ENCODE measurements at regions of chr19 and their contacts with region 1.

Region 1: GRCh38 chr19:38869856-38870607 is 8.0 kb downstream of the RINL start:
- DNase-seq: peak; percentile 92 to 96 (median 93)
- H3K4me3 ChIP-seq: peak overlapping the region; percentile 78
- H3K4me3 Mint-ChIP-seq: peak overlapping the region; percentile 87 to 94 (median 91)
- H3K27ac ChIP-seq: peak overlapping the region; percentile 66
- H3K27ac Mint-ChIP-seq: peak overlapping the region; percentile 48 to 97 (median 94)
- H3K4me1 ChIP-seq: peaks cover 37% of the 10 kb centered on the region
- H3K4me1 Mint-ChIP-seq: peaks cover 30 to 58% (median 51%) of the 10 kb centered on the region in 3 donors
- H3K27me3 ChIP-seq: no peaks in the 10 kb centered on the region
- H3K27me3 Mint-ChIP-seq: no peaks in the 10 kb centered on the region

Region 2: GRCh38 chr19:38734426-38735256 is 135.4 kb before region 1 on chr19:
- CTCF ChIA-PET with region 1: interaction called, 15 read pairs
- POLR2A ChIA-PET with region 1: interaction called, 6 read pairs
- DNase-seq: peak in 4 of 5 donors; percentile 29 to 64 (median 42)
- H3K4me3 ChIP-seq: peak overlapping the region; percentile 56
- H3K4me3 Mint-ChIP-seq: peak overlapping the region; percentile 83 to 91 (median 88)
- H3K27ac ChIP-seq: peak overlapping the region; percentile 54
- H3K27ac Mint-ChIP-seq: peak overlapping the region; percentile 86 to 97 (median 88)
- H3K4me1 ChIP-seq: peaks cover 25% of the 10 kb centered on the region
- H3K4me1 Mint-ChIP-seq: peaks cover 39 to 73% (median 40%) of the 10 kb centered on the region in 3 donors
- H3K27me3 ChIP-seq: no peaks in the 10 kb centered on the region
- H3K27me3 Mint-ChIP-seq: peaks cover 0 to 4% of the 10 kb centered on the region in 2 donors

Region 3: DNA sequence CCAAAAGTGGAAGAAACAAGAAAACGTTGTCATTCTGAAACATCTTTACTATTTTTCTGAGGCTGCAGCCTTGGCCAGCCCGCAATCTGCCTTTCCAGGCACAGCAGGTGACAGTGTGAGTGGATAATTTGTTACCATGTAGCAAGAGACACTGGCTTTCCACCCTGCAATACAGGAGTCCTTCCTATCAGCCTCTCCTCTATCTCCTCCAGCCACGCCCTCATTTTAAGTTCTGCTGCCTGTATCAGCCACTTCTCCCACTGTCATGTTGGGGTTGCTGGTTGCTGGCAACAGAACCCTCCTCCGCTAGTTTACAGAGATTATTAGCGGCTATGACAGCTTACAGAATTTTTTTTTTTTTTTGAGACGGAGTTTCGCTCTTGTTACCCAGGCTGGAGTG is 89.0 kb before region 1 on chr19:
- CTCF ChIA-PET with region 1: no interaction called
- POLR2A ChIA-PET with region 1: no interaction called
- DNase-seq: no peak
- H3K4me3 ChIP-seq: no peak overlapping the region
- H3K4me3 Mint-ChIP-seq: no peak overlapping the region
- H3K27ac ChIP-seq: no peak overlapping the region
- H3K27ac Mint-ChIP-seq: no peak overlapping the region
- H3K4me1 ChIP-seq: no peaks in the 10 kb centered on the region
- H3K4me1 Mint-ChIP-seq: no peaks in the 10 kb centered on the region
- H3K27me3 ChIP-seq: no peaks in the 10 kb centered on the region
- H3K27me3 Mint-ChIP-seq: peaks cover 3 to 4% of the 10 kb centered on the region in 2 donors

Region 4: GRCh38 chr19:38842439-38843174 is 27.4 kb before region 1 on chr19:
- CTCF ChIA-PET with region 1: interaction called, 11 read pairs
- POLR2A ChIA-PET with region 1: interaction called, 21 read pairs
- DNase-seq: peak; percentile 36 to 84 (median 78)
- H3K4me3 ChIP-seq: peak overlapping the region; percentile 33
- H3K4me3 Mint-ChIP-seq: peak overlapping the region; percentile 70 to 91 (median 76)
- H3K27ac ChIP-seq: no peak overlapping the region
- H3K27ac Mint-ChIP-seq: peak overlapping the region; percentile 84 to 95 (median 92)
- H3K4me1 ChIP-seq: peaks cover 71% of the 10 kb centered on the region
- H3K4me1 Mint-ChIP-seq: peaks cover 63 to 80% (median 65%) of the 10 kb centered on the region in 3 donors
- H3K27me3 ChIP-seq: no peaks in the 10 kb centered on the region
- H3K27me3 Mint-ChIP-seq: peaks cover 0 to 10% of the 10 kb centered on the region in 2 donors

Region 5: GRCh38 chr19:38849860-38850435 is 20.1 kb before region 1 on chr19 and contains the start of gene HNRNPL:
- CTCF ChIA-PET with region 1: interaction called, 38 read pairs
- POLR2A ChIA-PET with region 1: interaction called, 59 read pairs
- DNase-seq: peak; percentile 98 to 100 (median 100)
- H3K4me3 ChIP-seq: peak within 1 kb of the TSS; percentile 94
- H3K4me3 Mint-ChIP-seq: peak within 1 kb of the TSS; percentile 60 to 97 (median 94)
- H3K27ac ChIP-seq: peak within 1 kb of the TSS; percentile 97
- H3K27ac Mint-ChIP-seq: peak within 1 kb of the TSS; percentile 78 to 100 (median 98)
- H3K4me1 ChIP-seq: peaks cover 58% of the 10 kb centered on the region
- H3K4me1 Mint-ChIP-seq: peaks cover 57 to 67% (median 64%) of the 10 kb centered on the region in 3 donors
- H3K27me3 ChIP-seq: no peaks in the 10 kb centered on the region
- H3K27me3 Mint-ChIP-seq: peaks cover 0 to 15% of the 10 kb centered on the region in 2 donors
- total RNA-seq, gene HNRNPL: 656 to 679 TPM

Region 6: GRCh38 chr19:38856813-38857212 is 13.2 kb before region 1 on chr19:
- CTCF ChIA-PET with region 1: interaction called, 38 read pairs
- POLR2A ChIA-PET with region 1: interaction called, 59 read pairs
- DNase-seq: no peak
- H3K4me3 ChIP-seq: no peak overlapping the region
- H3K4me3 Mint-ChIP-seq: peak overlapping the region in 6 of 7 donors; percentile 37 to 69 (median 60)
- H3K27ac ChIP-seq: no peak overlapping the region
- H3K27ac Mint-ChIP-seq: peak overlapping the region in 7 of 8 donors; percentile 76 to 99 (median 91)
- H3K4me1 ChIP-seq: peaks cover 21% of the 10 kb centered on the region
- H3K4me1 Mint-ChIP-seq: peaks cover 26 to 34% (median 27%) of the 10 kb centered on the region in 3 donors
- H3K27me3 ChIP-seq: no peaks in the 10 kb centered on the region
- H3K27me3 Mint-ChIP-seq: peaks cover 0 to 4% of the 10 kb centered on the region in 2 donors

Region 7: DNA sequence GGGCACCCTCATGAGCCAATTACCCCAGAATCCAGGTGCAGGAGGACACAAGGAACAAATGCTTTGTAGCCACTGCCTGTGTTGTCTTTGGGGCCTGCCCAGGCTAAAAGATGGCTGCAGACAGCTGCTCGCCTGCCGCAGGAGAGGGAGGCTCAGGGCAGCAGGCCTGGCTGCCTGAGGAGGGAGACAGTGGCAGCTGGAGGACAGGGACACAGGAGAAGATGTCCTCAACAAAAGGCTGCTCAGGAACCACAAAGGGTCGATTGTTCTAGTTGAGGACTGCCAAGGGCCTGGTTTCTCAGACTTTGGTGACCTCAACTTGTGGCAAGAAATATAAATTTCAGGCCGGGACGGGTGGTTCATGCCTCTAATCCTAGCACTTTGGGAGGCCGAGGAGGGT is 21.7 kb after region 1 on chr19:
- CTCF ChIA-PET with region 1: interaction called, 30 read pairs
- POLR2A ChIA-PET with region 1: interaction called, 4 read pairs
- DNase-seq: no peak
- H3K4me3 ChIP-seq: no peak overlapping the region
- H3K4me3 Mint-ChIP-seq: no peak overlapping the region
- H3K27ac ChIP-seq: no peak overlapping the region
- H3K27ac Mint-ChIP-seq: no peak overlapping the region
- H3K4me1 ChIP-seq: peaks cover 6% of the 10 kb centered on the region
- H3K4me1 Mint-ChIP-seq: peaks cover 0 to 9% (median 6%) of the 10 kb centered on the region in 3 donors
- H3K27me3 ChIP-seq: no peaks in the 10 kb centered on the region
- H3K27me3 Mint-ChIP-seq: no peaks in the 10 kb centered on the region

Region 8: GRCh38 chr19:39064405-39064804 is 194.4 kb after region 1 on chr19:
- CTCF ChIA-PET with region 1: no interaction called
- POLR2A ChIA-PET with region 1: no interaction called
- DNase-seq: no peak
- H3K4me3 ChIP-seq: no peak overlapping the region
- H3K4me3 Mint-ChIP-seq: no peak overlapping the region
- H3K27ac ChIP-seq: no peak overlapping the region
- H3K27ac Mint-ChIP-seq: no peak overlapping the region
- H3K4me1 ChIP-seq: no peaks in the 10 kb centered on the region
- H3K4me1 Mint-ChIP-seq: peaks cover 3 to 10% (median 6%) of the 10 kb centered on the region in 3 donors
- H3K27me3 ChIP-seq: no peaks in the 10 kb centered on the region
- H3K27me3 Mint-ChIP-seq: peaks cover 2 to 4% of the 10 kb centered on the region in 2 donors

Region 9: GRCh38 chr19:39293394-39293793 is 423.4 kb after region 1 on chr19:
- CTCF ChIA-PET with region 1: no interaction called
- POLR2A ChIA-PET with region 1: no interaction called
- DNase-seq: peak in 1 of 5 donors; percentile 6
- H3K4me3 ChIP-seq: no peak overlapping the region
- H3K4me3 Mint-ChIP-seq: no peak overlapping the region
- H3K27ac ChIP-seq: no peak overlapping the region
- H3K27ac Mint-ChIP-seq: peak overlapping the region in 1 of 8 donors; percentile 30
- H3K4me1 ChIP-seq: peaks cover 7% of the 10 kb centered on the region
- H3K4me1 Mint-ChIP-seq: peaks cover 16 to 23% (median 16%) of the 10 kb centered on the region in 3 donors
- H3K27me3 ChIP-seq: no peaks in the 10 kb centered on the region
- H3K27me3 Mint-ChIP-seq: no peaks in the 10 kb centered on the region

Measured in CD8-positive, alpha-beta memory T cell (primary cell).